Dendritic cell treated with granulocyte-macrophage colony-stimulating factor and Interleukin-4, amounts not matched to agents 40 ng/mL and 50 ng/mL, for 4 days (primary cell): ENCODE measurements at regions of chr17 and their contacts with region 1.

Region 1: DNA sequence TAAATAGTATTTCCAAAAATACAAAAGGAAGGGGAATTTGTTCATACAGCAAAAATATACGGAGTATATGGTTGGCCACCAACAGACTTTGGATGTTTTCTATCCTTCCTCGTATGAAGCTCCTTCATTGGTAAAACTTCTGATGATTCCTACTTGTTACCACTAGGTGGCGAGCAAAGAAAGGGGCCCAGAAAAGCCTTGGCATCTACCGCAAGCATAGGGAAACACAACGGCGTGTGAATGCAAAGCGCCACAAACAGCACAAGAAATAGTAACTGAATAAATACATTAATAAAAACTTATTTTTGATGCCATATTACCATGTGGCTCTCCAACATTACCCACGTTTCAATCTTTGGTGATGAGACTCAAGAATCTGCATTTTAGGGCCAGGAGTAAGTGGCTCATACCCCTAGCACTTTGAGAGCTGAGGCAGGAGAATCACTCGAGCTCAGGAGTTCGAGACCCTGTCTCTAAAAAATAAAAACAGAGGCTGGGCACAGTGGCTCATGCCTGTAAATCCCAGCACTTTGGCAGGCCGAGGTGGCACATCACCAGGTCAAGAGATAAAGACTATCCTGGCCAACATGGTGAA is 34.5 kb downstream of the YWHAE start:
- H3K4me3 Mint-ChIP-seq: no peak overlapping the region
- H3K27ac Mint-ChIP-seq: no peak overlapping the region
- H3K4me1 Mint-ChIP-seq: peaks cover 49% of the 10 kb centered on the region
- H3K27me3 Mint-ChIP-seq: no peaks in the 10 kb centered on the region

Region 2: DNA sequence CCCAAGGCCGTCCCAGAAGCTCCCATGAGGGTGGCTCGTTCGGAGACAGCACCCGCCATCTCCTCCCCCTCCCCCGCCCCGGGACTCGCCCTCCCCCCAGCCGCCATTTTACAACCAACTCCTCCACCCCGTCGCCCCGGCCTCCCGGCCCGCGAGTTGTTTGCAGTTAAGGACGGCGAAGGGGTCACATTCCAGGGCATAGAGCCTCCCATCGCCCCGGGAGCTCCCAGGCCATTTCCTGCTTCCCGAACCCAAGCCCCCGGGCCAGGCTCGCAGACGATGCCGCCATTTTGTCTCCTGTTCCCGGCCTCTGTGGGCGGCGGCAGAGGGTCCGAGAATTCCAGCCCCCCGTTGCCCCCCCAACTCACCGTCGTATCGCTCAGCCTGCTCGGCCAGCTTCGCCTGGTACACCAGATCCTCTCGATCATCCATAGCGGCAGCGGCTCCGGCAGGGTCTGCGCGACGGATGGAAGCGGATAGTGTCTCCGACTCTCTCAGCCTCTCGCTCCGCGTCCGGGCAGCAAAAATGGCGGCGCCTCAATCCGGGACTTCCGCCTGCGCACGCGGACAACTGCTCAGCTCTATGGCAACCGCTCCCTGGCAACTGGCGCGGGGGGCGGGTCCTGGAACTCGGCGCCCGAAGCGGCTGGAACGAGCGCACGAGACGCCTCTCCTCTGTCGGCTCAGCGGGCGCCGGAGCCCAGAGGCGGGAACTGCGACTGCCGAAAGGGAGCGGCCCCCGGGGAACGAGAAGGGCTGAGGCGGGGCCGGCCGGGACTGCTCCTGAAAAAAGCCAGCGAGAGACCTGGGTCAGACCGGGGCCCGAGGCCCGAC is 34.4 kb after region 1 on chr17 and contains the start of gene YWHAE:
- intact Hi-C with region 1: loop called (anchors 5 kb)
- H3K4me3 Mint-ChIP-seq: peak within 1 kb of the TSS; percentile 98
- H3K27ac Mint-ChIP-seq: peak within 1 kb of the TSS; percentile 98
- H3K4me1 Mint-ChIP-seq: peaks cover 42% of the 10 kb centered on the region
- H3K27me3 Mint-ChIP-seq: peaks cover 8% of the 10 kb centered on the region

Region 3: DNA sequence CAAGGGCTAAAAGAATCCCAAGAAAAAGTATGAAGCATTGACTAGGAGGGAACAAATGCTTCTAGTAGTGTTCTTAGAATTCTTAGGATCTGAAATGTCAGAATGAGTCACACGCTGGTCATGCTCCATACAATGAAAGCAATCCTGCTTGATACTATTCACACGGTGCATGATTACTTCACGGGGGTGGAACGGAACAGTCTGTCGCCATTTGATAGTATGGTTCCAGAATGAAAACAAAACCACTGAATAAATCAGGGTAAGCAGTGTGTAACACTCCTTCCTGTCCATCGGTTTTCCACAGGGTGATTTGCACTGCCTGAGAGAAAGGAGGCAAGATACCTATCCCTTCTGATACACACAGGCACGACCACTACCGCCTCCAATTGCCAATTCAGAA is 57.4 kb after region 1 on chr17:
- intact Hi-C with region 1: loop called (anchors 10 kb)
- H3K4me3 Mint-ChIP-seq: no peak overlapping the region
- H3K27ac Mint-ChIP-seq: peak overlapping the region; percentile 25
- H3K4me1 Mint-ChIP-seq: peaks cover 22% of the 10 kb centered on the region
- H3K27me3 Mint-ChIP-seq: no peaks in the 10 kb centered on the region